Adrenal gland (tissue), 19 donors: ENCODE measurements at regions of chr10 and their contacts with region 1.

Region 1: DNA sequence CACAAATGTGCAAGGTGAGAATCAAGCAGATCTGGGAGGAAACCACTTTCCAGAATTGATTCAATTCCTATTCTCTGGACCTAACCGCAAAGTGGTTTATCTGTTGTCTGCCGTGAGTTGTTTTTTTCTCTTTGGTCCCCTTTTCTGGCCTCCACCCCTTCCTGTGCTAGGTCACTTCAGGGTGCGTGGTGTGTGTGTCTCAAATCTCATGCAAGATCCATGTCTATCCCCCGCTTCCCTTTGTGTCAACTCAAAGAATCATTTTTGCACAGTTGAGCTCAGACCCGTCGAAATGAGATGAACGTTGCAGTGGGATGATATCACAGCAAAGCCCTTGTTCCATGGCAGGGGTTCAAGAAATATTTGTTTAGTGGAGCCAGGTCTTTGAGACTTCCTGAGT is 184.5 kb downstream of the GATA3 start:
- DNase-seq: no peak
- H3K4me3 ChIP-seq: no peak overlapping the region
- H3K27ac ChIP-seq: no peak overlapping the region
- H3K4me1 ChIP-seq: no peaks in the 10 kb centered on the region
- H3K27me3 ChIP-seq: no peaks in the 10 kb centered on the region
- CTCF ChIP-seq: no peak
- POLR2A ChIP-seq: no peak

Region 2: DNA sequence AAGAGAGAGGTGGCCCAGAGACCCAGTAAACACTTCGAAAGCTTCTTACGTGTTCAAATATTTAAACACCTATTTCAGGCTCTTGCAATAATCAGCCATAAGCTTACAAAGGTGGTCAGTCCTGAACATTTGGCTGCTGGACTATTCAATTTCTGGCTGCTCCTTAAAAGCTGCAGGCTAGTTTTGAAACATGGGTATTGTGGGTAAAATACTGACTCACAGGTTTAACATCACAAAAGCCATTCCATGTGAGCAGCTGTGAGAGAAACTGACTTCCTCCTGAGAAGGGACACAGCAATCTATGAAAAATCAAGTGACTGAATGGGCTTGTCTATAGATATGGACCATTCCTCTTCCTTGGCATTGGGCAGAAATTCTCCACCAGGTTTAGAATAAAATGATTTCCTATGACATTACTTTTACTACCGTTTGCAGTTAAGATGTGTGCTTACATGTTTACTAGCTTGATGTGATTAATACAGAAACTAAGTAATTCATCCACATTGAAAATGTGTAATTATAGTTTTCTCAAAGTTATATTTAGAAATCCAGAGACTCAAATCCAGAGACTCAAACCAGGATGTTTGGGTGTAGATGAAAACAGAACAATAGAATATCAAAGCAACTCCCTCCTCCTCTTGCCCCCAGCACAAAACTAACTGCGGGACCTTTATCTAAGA is 67.8 kb after region 1 on chr10:
- intact Hi-C with region 1: no loop called
- DNase-seq: no peak
- H3K4me3 ChIP-seq: no peak overlapping the region
- H3K27ac ChIP-seq: no peak overlapping the region
- H3K4me1 ChIP-seq: no peaks in the 10 kb centered on the region
- H3K27me3 ChIP-seq: no peaks in the 10 kb centered on the region
- CTCF ChIP-seq: no peak
- POLR2A ChIP-seq: no peak

Region 3: DNA sequence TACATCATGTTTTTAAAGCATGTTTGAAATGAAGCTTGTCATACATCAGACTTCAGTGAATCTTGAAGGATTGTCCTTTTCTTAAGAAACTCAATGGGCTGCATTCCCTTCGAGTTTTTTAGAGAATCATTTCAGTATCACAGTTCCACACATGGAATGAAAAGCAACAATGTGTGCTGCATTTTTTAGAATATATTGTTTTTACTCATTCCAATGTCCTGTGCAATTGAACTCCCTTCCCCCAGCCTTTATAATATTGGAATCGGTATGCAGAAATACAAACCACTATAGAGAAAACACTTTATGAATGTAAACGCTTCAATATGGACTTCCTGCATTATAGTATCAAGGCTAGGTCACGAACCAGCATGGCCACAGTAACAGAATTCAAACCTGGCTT is 449.9 kb after region 1 on chr10:
- intact Hi-C with region 1: loop called in 1 of 2 experiments (anchors 10 kb)
- DNase-seq: no peak
- H3K4me3 ChIP-seq: no peak overlapping the region
- H3K27ac ChIP-seq: no peak overlapping the region
- H3K4me1 ChIP-seq: no peaks in the 10 kb centered on the region
- H3K27me3 ChIP-seq: no peaks in the 10 kb centered on the region
- CTCF ChIP-seq: no peak
- POLR2A ChIP-seq: no peak